Aorta (tissue), 5 donors: ENCODE measurements at regions of chr10 and their contacts with region 1.

Region 1: GRCh38 chr10:93437088-93437945 is 44.8 kb downstream of the MYOF start:
- DNase-seq: peak; percentile 92
- ATAC-seq: peak; percentile 94
- H3K4me3 ChIP-seq: no peak overlapping the region
- H3K27ac ChIP-seq: peak overlapping the region; percentile 100
- H3K4me1 ChIP-seq: peaks cover 2 to 9% of the 10 kb centered on the region in 2 donors
- H3K27me3 ChIP-seq: no peaks in the 10 kb centered on the region

Region 2: GRCh38 chr10:93235686-93236085 is 201.6 kb before region 1 on chr10:
- intact Hi-C with region 1: no loop called
- DNase-seq: no peak
- ATAC-seq: no peak
- H3K4me3 ChIP-seq: no peak overlapping the region
- H3K27ac ChIP-seq: no peak overlapping the region
- H3K4me1 ChIP-seq: peaks cover 3% of the 10 kb centered on the region in 2 donors
- H3K27me3 ChIP-seq: no peaks in the 10 kb centered on the region

Region 3: DNA sequence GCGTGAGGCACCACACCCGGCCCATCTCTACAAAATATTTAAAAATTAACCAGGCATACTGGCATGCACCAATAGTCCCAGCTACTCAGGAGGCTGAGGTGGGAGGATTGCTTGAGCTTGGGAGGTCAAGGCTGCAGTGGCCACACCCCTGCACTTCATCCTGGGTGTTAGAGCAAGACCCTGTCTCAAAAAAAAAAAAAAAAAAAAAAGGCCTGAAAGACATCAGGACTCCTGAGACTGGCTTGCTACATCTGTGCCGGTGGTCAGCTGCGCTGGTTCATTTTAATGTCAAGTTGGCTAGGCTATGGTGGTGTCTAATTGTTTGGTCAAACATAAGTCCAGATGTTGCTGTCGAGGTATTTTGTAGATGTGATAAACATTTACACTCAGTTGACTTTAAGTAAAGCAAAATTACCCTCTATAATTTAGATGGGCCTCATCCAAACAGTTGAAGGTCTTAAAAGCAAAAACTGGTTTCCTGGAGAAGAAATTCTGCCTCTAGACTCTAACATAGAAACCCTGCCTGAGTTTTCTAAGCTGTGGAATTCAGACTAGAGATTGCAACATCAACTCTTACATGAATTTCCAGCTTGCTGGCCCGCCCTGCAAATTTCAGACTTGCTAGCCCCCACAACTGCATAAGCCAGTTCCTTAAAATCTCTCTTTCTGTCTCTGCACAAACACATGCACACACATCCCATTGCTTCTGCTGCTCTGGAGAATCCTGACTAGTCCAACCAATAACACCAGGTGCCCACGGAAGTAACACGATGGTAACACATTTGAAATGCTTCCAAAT is 26.6 kb after region 1 on chr10:
- intact Hi-C with region 1: loop called in 1 of 2 experiments (anchors 1 kb)
- DNase-seq: peak in 1 of 2 donors; percentile 77
- ATAC-seq: peak; percentile 49
- H3K4me3 ChIP-seq: no peak overlapping the region
- H3K27ac ChIP-seq: peak overlapping the region; percentile 83 to 86
- H3K4me1 ChIP-seq: peaks cover 3 to 19% of the 10 kb centered on the region in 2 donors
- H3K27me3 ChIP-seq: no peaks in the 10 kb centered on the region